GM10248 (cell line): ENCODE measurements at regions of chr3 and their contacts with region 1.

Region 1: GRCh38 chr3:47824541-47825473 is 21.9 kb downstream of the DHX30 start:
- DNase-seq: peak; percentile 96
- CTCF ChIP-seq: peak; percentile 96

Region 2: DNA sequence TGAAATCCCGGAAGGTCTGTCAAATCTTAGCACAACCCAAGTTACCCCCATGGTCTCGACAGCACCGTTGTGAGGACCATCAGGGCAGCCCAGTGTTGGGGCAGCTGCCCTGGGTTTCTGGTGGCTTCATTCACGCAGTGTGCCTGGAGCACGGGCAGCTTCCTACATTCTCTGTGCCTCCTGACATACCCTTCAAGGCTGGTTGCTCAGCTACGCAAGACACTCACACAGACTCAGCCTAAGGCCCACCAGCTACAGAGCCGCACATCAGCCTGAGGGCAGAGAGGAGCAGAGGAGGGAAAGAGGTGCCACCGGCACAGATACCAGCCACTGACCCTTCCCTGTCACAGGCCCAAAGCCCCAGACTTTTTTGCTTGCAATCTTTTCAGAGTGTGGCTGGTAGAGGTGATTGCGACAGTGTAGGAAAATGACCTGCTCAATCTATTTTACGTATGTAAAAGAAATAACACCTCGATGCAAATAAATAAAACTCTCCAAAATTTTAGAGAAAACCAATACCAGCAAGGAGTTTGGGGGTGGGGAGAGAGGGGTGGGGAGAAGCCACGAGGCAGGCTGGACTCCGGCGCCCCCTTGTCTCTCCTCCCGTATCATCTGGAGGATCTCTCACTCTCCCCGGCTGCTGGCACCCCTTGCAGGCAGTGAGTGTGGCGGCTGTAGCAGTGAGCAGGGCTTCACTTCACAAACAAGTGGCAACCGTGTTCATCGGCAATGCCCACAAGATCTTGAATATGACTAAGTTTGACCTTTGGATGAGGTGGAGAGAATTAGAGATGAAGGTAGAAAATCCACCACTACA is 258.9 kb before region 1 on chr3:
- CTCF ChIA-PET with region 1: no interaction called
- POLR2A ChIA-PET with region 1: no interaction called
- DNase-seq: no peak
- CTCF ChIP-seq: no peak

Region 3: DNA sequence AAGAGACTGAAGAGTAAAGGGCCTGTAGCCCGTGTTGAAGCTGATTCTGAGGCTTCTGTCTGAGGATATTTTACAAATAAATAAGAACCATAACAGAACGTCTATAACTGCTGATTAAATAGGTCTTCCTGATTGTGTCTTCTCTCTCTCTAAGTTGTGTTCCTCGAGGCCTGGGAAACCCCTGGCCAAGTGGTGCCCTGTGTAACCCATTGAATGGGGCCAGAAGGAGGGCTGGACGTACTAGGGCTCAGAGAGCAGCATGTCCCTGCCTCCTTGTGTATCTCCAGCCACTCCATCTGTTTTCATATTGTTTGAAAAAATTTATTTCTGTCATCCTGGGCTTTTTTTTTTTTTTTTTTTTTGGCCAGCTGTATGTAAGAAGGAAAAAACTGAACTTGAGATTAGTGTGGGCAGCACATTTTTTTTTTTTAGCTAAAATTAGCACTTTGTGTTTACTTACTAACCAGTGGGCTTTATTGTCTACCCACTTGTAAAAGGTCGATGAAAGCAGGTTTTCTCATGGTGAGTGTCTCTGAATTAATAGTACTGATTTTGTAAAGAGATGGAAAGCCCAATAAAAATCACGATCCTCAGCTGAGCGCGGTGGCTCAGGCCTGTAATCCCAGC is 11.1 kb before region 1 on chr3:
- CTCF ChIA-PET with region 1: interaction called, 77 read pairs
- POLR2A ChIA-PET with region 1: no interaction called
- DNase-seq: no peak
- CTCF ChIP-seq: no peak

Region 4: DNA sequence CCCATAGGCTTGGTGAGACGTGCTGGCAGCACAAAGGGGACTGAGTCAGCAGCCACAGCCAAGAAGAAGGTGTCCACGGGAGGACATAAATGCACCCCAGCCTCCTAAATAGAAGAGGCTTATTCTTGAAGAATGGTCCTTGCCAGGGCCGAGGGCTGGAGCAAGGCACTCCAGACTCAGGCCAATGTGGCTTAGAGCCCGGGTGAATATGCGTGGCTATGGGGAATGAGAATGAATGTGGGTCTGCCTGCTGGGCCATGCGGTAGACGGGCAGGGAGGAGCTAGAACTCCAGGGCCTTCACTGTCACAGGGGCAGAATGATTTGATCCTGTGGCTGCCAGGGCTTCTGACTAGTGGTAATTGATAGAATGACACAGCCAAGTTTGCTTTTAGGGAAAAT is 12.2 kb after region 1 on chr3:
- CTCF ChIA-PET with region 1: interaction called, 57 read pairs
- POLR2A ChIA-PET with region 1: interaction called, 5 read pairs
- DNase-seq: no peak
- CTCF ChIP-seq: no peak

Region 5: DNA sequence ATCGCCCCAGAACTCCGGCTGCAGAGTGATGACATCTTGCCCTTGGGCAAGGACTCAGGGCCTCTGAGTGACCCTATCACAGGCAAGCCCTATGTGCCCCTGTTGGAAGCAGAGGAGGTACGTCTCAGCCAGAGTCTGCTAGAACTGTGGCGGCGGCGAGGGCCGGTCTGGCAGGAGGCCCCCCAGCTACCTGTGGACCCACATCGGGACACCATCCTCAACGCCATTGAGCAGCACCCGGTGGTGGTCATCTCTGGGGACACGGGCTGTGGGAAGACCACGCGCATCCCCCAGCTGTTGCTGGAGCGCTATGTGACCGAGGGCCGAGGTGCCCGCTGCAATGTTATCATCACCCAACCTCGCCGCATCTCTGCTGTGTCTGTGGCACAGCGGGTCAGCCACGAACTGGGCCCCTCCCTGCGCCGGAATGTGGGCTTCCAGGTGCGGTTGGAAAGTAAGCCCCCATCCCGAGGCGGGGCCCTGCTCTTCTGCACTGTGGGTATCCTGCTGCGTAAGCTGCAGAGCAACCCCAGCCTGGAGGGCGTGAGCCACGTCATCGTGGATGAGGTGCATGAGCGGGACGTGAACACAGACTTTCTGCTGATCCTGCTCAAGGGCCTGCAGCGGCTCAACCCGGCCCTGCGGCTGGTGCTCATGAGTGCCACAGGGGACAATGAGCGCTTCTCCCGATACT is 21.5 kb after region 1 on chr3:
- CTCF ChIA-PET with region 1: interaction called, 57 read pairs
- POLR2A ChIA-PET with region 1: no interaction called
- DNase-seq: no peak
- CTCF ChIP-seq: no peak

Region 6: DNA sequence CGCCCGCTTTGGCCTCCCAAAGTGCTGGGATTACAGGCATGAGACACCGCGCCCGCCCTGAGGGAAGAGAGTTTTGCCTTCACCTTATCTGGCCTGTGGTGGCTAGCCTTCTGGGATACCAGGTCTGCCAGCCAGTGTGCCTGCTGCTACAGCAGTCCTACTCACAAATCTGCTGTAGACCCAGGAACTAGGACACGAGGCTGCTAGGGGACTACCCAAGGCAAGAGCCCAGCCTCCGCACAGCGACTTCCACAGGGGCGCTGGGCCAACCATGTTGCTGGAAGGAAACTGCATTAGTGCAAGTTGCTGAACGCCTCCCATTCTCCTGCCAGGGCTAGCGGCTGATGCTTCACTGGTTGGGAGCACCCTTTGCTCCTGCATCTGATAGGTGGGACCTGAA is 31.9 kb after region 1 on chr3:
- CTCF ChIA-PET with region 1: no interaction called
- POLR2A ChIA-PET with region 1: no interaction called
- DNase-seq: no peak
- CTCF ChIP-seq: no peak